ENCODE measurements at regions of chr14 and their contacts with region 1.

Region 1: GRCh38 chr14:66624299-66624937 is 116.5 kb downstream of the GPHN start:
- DNase-seq: peak; percentile 53
- ATAC-seq: peak; percentile 69
- H3K4me3 Mint-ChIP-seq: no peak overlapping the region
- H3K27ac Mint-ChIP-seq: no peak overlapping the region
- H3K4me1 Mint-ChIP-seq: no peaks in the 10 kb centered on the region
- H3K27me3 Mint-ChIP-seq: no peaks in the 10 kb centered on the region

Region 2: DNA sequence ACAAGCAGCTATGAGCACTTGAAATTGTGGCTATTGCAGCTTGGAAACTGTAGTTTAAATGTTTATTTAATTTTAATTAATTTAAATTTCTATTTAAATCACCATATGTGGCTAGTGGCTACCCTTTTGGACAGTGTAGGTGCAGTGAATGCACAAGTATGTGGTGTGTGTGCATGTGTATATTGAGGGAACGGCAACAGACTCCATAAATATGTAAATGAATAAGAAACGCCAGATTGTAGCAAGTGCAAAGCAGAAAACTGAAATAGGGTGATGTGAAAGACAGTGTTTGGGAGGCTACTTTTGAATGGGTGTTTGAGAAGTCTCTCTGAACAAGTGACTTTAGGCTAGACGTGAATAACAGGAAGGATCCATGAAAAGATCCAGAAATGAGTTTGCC is 170.9 kb before region 1 on chr14:
- CTCF ChIA-PET with region 1: no interaction called
- POLR2A ChIA-PET with region 1: no interaction called
- DNase-seq: no peak
- ATAC-seq: no peak
- H3K4me3 Mint-ChIP-seq: no peak overlapping the region
- H3K27ac Mint-ChIP-seq: no peak overlapping the region
- H3K4me1 Mint-ChIP-seq: no peaks in the 10 kb centered on the region
- H3K27me3 Mint-ChIP-seq: no peaks in the 10 kb centered on the region

Region 3: GRCh38 chr14:66746316-66747006 is 122.0 kb after region 1 on chr14:
- CTCF ChIA-PET with region 1: interaction called, 12 read pairs
- POLR2A ChIA-PET with region 1: no interaction called
- DNase-seq: peak; percentile 27
- ATAC-seq: no peak
- H3K4me3 Mint-ChIP-seq: no peak overlapping the region
- H3K27ac Mint-ChIP-seq: no peak overlapping the region
- H3K4me1 Mint-ChIP-seq: no peaks in the 10 kb centered on the region
- H3K27me3 Mint-ChIP-seq: no peaks in the 10 kb centered on the region

Region 4: GRCh38 chr14:67112344-67112743 is 487.9 kb after region 1 on chr14:
- CTCF ChIA-PET with region 1: interaction called, 10 read pairs
- POLR2A ChIA-PET with region 1: no interaction called
- DNase-seq: no peak
- ATAC-seq: no peak
- H3K4me3 Mint-ChIP-seq: no peak overlapping the region
- H3K27ac Mint-ChIP-seq: no peak overlapping the region
- H3K4me1 Mint-ChIP-seq: no peaks in the 10 kb centered on the region
- H3K27me3 Mint-ChIP-seq: no peaks in the 10 kb centered on the region

Measured in activated CD8-positive, alpha-beta T cell treated with anti-CD3 and anti-CD28 coated beads, Interleukin-2, amount 10 ng/mL, durations not matched to agents 7 days and 5 days (primary cell).